Spleen (tissue), 13 donors: ENCODE measurements at regions of chr6 and their contacts with region 1.

Region 1: GRCh38 chr6:7312616-7313504 is at the start of gene SSR1:
- DNase-seq: peak; percentile 100
- H3K4me3 ChIP-seq: peak within 1 kb of the TSS; percentile 80 to 100 (median 96)
- H3K27ac ChIP-seq: peak within 1 kb of the TSS; percentile 88 to 96 (median 94)
- H3K4me1 ChIP-seq: peaks cover 12 to 61% (median 44%) of the 10 kb centered on the region in 6 donors
- H3K27me3 ChIP-seq: no peaks in the 10 kb centered on the region
- CTCF ChIP-seq: peak in 3 of 11 experiments; percentile 23 to 42 (median 27)
- POLR2A ChIP-seq: peak in 1 of 3 donors; percentile 19
- total RNA-seq, gene SSR1: 70.7 to 132 (median 114) TPM

Region 2: DNA sequence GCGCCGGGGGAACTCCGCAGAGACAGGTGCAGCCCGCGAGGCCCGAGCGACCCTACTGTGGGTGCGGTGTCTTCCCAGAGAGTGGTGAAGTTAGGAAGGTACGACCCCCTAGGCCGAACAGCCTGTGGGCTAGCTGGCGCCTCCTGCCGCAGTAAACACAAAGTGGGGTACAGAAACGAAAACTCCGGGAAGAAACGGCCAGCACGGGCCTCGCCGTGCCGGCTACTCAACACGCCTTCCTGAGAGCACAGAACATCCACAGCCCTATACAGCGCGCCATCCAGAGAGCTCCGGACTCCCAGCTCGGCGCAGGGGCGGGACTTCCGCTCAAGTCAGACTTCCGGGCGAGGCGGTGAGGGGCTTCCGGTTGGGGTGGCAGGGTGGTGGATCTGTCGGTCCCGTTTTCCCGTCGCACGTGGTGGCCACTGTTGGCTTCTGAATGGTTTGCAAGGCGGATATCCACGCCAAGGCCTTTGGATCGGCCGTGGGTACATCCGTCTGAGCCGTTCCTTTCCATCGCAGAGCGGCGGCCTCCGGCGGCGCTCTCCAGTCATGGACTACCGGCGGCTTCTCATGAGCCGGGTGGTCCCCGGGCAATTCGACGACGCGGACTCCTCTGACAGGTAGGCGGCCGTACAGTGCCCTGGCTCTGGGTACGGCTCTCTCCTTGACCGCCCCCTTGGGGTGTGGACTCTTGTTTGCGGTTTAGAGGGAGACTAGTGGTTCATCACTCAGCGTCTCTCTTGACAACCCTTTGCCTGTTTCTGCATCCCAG is 76.8 kb after region 1 on chr6 and contains the starts of genes CAGE1 and RIOK1:
- intact Hi-C with region 1: loop called (anchors 10 kb)
- DNase-seq: peak; percentile 98
- H3K4me3 ChIP-seq: peak within 1 kb of the TSS; percentile 56 to 90 (median 83)
- H3K27ac ChIP-seq: peak within 1 kb of the TSS; percentile 89 to 95 (median 92)
- H3K4me1 ChIP-seq: peaks cover 12 to 42% (median 30%) of the 10 kb centered on the region in 6 donors
- H3K27me3 ChIP-seq: no peaks in the 10 kb centered on the region
- CTCF ChIP-seq: peak in 3 of 11 experiments; percentile 15 to 47 (median 25)
- POLR2A ChIP-seq: peak in 1 of 3 donors; percentile 77
- total RNA-seq, gene CAGE1: not detected
- total RNA-seq, gene RIOK1: 15.8 to 26.6 (median 20.7) TPM

Region 3: DNA sequence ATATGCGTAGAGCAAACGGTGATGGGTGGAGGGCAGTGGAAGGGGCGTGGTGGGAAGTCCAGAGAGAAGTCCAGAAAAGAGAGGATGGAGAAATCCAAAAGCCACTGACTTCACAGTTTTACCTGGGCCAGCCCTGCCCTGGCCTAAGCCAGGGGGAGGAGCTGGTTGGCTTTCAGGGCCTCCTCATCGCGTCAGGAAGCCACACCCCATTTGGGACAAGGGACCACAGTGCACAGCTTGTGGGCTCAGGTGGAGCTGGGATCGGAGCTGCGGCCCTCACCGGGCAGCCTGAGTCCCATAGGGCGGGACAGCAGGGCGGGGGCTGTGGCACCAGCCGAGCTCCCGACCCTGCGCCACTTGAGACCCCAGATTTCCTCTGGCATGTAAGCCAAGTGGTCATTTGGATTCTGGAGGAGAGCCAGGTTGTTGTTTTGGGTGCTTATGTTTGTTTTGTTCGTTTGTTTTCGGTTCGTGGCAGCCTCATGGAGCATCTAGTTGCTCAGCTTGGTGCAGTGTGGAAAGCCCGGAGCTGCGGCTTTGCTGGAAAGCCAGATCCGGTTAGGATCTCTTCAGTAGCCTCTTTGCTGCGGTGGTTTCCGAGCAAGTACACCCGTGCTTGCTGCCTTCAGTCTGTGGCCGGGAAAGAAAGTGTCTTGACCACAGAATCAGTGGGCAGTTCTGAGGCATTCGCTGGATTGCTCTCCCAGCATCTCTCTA is 119.0 kb after region 1 on chr6:
- intact Hi-C with region 1: no loop called
- DNase-seq: no peak
- H3K4me3 ChIP-seq: peak overlapping the region in 1 of 8 donors; percentile 5
- H3K27ac ChIP-seq: no peak overlapping the region
- H3K4me1 ChIP-seq: peaks cover 0 to 25% (median 15%) of the 10 kb centered on the region in 6 donors
- H3K27me3 ChIP-seq: peaks cover 0 to 6% (median 0%) of the 10 kb centered on the region in 7 donors
- CTCF ChIP-seq: no peak
- POLR2A ChIP-seq: no peak